ENCODE measurements at regions of chr9 and their contacts with region 1.

Region 1: GRCh38 chr9:115157245-115157674 is 39.3 kb upstream of the TNC start:
- DNase-seq: no peak
- H3K4me3 ChIP-seq: no peak overlapping the region
- H3K27ac ChIP-seq: peak overlapping the region; percentile 64 to 76 (median 72)
- H3K4me1 ChIP-seq: peaks cover 0 to 55% (median 27%) of the 10 kb centered on the region in 4 donors
- H3K27me3 ChIP-seq: no peaks in the 10 kb centered on the region
- CTCF ChIP-seq: no peak
- EP300 ChIP-seq: no peak
- POLR2A ChIP-seq: no peak

Region 2: GRCh38 chr9:114919611-114920010 is 237.6 kb before region 1 on chr9:
- intact Hi-C with region 1: no loop called
- DNase-seq: no peak
- H3K4me3 ChIP-seq: no peak overlapping the region
- H3K27ac ChIP-seq: no peak overlapping the region
- H3K4me1 ChIP-seq: no peaks in the 10 kb centered on the region
- H3K27me3 ChIP-seq: no peaks in the 10 kb centered on the region
- CTCF ChIP-seq: no peak
- EP300 ChIP-seq: no peak
- POLR2A ChIP-seq: no peak

Region 3: DNA sequence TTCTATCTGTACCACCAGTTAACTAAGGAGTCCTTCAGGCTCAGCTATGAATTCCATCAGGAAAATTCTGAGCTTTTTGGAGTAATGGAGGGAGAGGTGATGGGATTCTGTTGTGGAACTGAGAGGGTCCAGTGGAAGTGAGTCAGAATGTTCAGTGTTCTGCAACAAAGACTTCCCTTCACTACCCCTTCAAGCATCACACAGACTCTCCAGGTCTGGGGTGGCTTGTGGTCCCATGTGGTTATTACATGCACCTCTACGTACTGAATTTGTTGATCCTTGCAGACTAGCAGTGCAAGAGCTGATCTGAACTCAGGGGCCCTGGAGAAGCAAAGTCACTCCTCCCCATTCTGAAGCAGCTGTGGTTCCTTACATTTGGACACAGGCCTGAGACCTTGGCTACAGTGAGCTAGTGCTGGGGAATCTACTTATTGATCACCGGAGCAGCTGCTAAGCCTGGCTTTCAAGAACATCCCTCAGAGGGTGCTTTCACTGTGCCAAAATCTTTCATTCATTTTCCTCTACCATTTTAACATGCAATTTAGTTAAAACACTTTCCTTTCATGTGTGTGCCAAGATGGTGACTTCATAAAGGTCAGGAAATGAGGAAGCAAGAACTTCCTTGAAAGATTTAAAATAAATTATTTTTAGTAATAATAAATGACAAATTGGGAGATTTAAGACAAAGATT is 35.7 kb after region 1 on chr9:
- intact Hi-C with region 1: no loop called
- DNase-seq: no peak
- H3K4me3 ChIP-seq: no peak overlapping the region
- H3K27ac ChIP-seq: no peak overlapping the region
- H3K4me1 ChIP-seq: peaks cover 0 to 9% (median 3%) of the 10 kb centered on the region in 4 donors
- H3K27me3 ChIP-seq: no peaks in the 10 kb centered on the region
- CTCF ChIP-seq: no peak
- EP300 ChIP-seq: no peak
- POLR2A ChIP-seq: no peak

Region 4: GRCh38 chr9:115204904-115205453 is 47.7 kb after region 1 on chr9:
- intact Hi-C with region 1: loop called (anchors 5 kb)
- DNase-seq: no peak
- H3K4me3 ChIP-seq: no peak overlapping the region
- H3K27ac ChIP-seq: no peak overlapping the region
- H3K4me1 ChIP-seq: peaks cover 0 to 20% (median 10%) of the 10 kb centered on the region in 4 donors
- H3K27me3 ChIP-seq: no peaks in the 10 kb centered on the region
- CTCF ChIP-seq: no peak
- EP300 ChIP-seq: no peak
- POLR2A ChIP-seq: no peak

Measured in esophagus muscularis mucosa (tissue), 4 donors.